H1 (cell line): ENCODE measurements at regions of chr10 and their contacts with region 1.

Region 1: GRCh38 chr10:29446327-29446726 is 157.5 kb downstream of the LYZL1 start:
- DNase-seq: no peak
- H3K4me3 ChIP-seq: no peak overlapping the region
- H3K27ac ChIP-seq: no peak overlapping the region
- H3K4me1 ChIP-seq: peaks cover 0 to 3% (median 0%) of the 10 kb centered on the region in 4 experiments; a peak in 2 of 7 replicates
- H3K27me3 ChIP-seq: no peaks in the 10 kb centered on the region
- CTCF ChIP-seq: no peak
- EP300 ChIP-seq: no peak
- POLR2A ChIP-seq: no peak
- RAD21 ChIP-seq: no peak

Region 2: DNA sequence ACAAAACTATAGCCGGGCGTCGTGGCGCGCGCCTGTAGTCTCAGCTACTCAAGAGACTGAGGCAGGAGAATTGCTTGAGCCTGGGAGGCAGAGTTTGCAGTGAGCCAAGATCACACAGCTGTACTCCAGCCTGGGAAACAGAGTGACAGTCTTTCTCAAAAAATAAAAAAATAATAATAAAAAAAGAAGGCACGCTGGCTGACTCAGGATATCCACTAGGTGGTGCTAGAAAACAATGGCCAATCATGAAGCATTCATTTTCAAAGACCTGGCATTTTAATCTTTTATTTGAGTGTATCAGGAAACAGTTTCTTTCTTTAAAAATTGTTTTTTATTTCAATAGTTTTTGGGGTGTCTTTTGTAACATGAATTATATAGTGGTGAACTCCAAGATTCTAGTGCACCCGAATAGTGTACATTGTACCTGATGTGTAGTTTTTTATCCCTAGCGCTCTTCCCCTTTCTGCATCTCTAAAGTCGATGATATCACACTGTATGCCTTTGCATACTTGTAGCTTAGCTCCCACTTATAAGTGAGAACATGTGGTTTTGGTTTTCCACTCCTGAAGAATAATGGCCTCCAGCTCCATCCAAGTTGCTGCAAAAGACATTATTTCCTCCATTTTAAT is 68.9 kb before region 1 on chr10:
- CTCF ChIA-PET with region 1: interaction called, 10 read pairs
- POLR2A ChIA-PET with region 1: no interaction called
- DNase-seq: no peak
- H3K4me3 ChIP-seq: no peak overlapping the region
- H3K27ac ChIP-seq: no peak overlapping the region
- H3K4me1 ChIP-seq: peaks cover 0 to 5% (median 0%) of the 10 kb centered on the region in 4 experiments; a peak in 2 of 7 replicates
- H3K27me3 ChIP-seq: no peaks in the 10 kb centered on the region
- CTCF ChIP-seq: peak in 2 of 3 experiments; percentile 34 to 59; a peak in 3 of 4 replicates
- EP300 ChIP-seq: no peak
- POLR2A ChIP-seq: no peak
- RAD21 ChIP-seq: peak; percentile 51 to 53

Region 3: DNA sequence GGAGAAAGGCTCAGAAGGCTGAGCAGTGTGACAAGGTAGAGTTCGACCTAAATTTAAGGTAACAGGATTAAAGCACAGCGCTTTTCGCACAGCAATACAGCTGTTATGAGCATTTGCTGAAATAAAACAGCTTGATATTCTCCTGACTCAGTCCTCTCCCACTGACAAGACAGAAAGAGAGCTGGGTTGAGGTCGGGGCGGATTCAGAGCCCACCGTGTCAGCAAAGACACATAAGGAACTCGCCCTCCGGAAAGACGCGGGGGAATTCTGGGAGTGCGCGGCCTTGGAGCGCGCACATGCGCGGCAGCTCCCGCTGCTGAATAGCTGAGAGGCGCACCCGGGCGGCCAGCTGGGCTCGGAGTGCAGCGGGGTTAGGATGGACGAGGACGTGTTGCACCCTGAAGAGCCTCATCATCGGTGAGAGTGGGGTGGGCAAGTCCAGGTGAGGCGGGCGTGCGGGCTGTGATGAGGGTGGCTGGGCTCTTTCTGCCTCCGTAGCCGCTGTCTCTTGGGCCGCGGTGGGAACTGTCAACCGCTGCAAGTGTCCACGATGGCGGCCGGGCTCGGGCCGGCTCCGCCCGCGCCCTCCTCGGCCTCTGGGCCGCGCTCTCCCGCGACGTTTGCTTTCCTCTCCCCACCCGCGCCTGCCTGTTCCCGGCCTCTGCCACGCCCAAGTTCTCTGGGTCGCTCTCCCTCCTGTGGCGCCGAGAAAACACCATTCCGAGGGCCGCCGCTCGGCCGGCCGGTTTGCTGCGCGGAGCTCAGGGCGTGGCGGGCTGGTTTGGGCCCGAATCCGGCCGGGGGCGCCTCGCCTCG is 36.9 kb before region 1 on chr10:
- CTCF ChIA-PET with region 1: no interaction called
- POLR2A ChIA-PET with region 1: no interaction called
- DNase-seq: no peak
- H3K4me3 ChIP-seq: no peak overlapping the region
- H3K27ac ChIP-seq: no peak overlapping the region
- H3K4me1 ChIP-seq: no peaks in the 10 kb centered on the region
- H3K27me3 ChIP-seq: no peaks in the 10 kb centered on the region
- CTCF ChIP-seq: no peak
- EP300 ChIP-seq: no peak
- POLR2A ChIP-seq: no peak
- RAD21 ChIP-seq: no peak

Region 4: DNA sequence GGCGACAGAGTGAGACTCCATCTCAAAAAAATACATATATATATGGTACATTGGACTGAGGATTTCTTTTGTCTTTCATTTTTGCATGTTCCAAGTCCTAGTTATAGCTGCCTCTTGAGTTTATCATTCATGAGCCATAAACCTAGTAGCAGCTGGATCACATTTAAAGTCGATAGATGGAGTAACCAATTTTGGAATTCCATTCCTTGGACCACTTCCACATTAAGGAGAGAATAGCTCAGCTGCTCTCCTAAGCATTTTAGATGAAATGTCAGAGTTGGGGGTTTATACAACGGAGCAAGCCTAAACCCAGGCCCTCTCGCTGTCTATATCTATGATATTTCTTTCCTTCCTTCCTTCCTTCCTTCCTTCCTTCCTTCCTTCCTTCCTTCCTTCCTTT is 16.2 kb before region 1 on chr10:
- CTCF ChIA-PET with region 1: interaction called, 12 read pairs
- POLR2A ChIA-PET with region 1: no interaction called
- DNase-seq: no peak
- H3K4me3 ChIP-seq: no peak overlapping the region
- H3K27ac ChIP-seq: no peak overlapping the region
- H3K4me1 ChIP-seq: no peaks in the 10 kb centered on the region
- H3K27me3 ChIP-seq: no peaks in the 10 kb centered on the region
- CTCF ChIP-seq: no peak
- EP300 ChIP-seq: no peak
- POLR2A ChIP-seq: no peak
- RAD21 ChIP-seq: no peak

Region 5: DNA sequence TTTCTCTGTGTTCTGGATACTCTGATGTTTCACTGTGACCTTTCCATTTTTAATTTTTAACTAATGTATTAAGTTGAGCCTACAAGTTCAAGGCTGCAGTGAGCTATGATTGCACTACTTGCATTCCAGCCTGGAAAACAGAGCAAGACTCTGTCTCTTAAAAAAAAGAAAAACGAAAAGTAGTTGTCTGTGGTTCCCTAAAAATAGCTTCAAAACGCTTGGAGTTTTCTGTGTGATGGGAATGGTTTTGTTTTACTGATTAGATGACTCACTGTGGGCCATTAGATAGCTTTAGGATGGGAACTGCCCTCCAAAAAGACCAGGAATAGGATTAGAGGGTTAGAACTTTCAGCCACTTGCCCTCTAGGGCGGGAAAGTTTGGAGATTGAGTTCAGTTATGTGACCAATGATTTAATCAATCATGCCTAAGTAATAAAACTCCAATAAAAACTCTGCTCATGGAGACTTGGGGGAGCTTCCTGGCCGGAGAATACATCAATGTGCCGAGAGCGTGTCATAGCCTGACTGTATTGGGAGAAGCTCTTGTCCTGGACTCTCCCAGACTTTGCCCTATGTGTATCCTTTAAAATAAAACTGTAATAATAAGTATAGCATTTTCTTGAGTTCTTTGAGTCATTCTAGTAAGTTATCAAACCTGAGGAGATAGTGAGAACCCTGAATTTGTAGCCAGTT is 10.4 kb before region 1 on chr10:
- CTCF ChIA-PET with region 1: interaction called, 11 read pairs
- POLR2A ChIA-PET with region 1: no interaction called
- DNase-seq: no peak
- H3K4me3 ChIP-seq: no peak overlapping the region
- H3K27ac ChIP-seq: no peak overlapping the region
- H3K4me1 ChIP-seq: no peaks in the 10 kb centered on the region
- H3K27me3 ChIP-seq: no peaks in the 10 kb centered on the region
- CTCF ChIP-seq: no peak
- EP300 ChIP-seq: no peak
- POLR2A ChIP-seq: no peak
- RAD21 ChIP-seq: no peak

Region 6: DNA sequence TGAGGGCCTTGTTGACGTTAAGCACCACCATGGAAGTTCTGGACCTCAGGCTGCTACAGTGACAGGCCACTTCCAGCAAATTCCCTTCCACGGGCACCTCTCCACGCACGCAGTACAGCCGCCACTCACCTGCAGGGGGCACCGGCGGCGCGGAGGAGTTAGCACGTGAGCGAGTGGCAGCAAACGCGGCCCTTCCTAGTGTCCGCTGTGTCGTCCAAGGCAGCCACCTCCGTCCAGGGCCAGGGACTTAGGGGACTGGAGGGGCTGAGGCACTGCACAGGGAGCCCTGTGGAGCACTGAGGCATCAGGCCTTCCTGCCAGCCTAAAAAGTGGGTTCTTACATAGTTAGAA is 24.0 kb after region 1 on chr10:
- CTCF ChIA-PET with region 1: interaction called, 14 read pairs
- POLR2A ChIA-PET with region 1: no interaction called
- DNase-seq: peak; percentile 25 to 91
- H3K4me3 ChIP-seq: no peak overlapping the region
- H3K27ac ChIP-seq: no peak overlapping the region
- H3K4me1 ChIP-seq: no peaks in the 10 kb centered on the region; a peak in 2 of 7 replicates
- H3K27me3 ChIP-seq: no peaks in the 10 kb centered on the region
- CTCF ChIP-seq: peak; percentile 81 to 95 (median 89)
- EP300 ChIP-seq: no peak
- POLR2A ChIP-seq: no peak
- RAD21 ChIP-seq: peak; percentile 69 to 80